HepG2 (cell line): ENCODE measurements at regions of chr7 and their contacts with region 1.

Region 1: GRCh38 chr7:43489257-43489656 is 93.7 kb upstream of the STK17A start:
- DNase-seq: peak; percentile 50
- ATAC-seq: peak; percentile 46
- H3K4me3 ChIP-seq: no peak overlapping the region
- H3K27ac ChIP-seq: peak overlapping the region; percentile 74
- H3K4me1 ChIP-seq: peaks cover 82% of the 10 kb centered on the region
- H3K27me3 ChIP-seq: no peaks in the 10 kb centered on the region
- CTCF ChIP-seq: no peak
- EP300 ChIP-seq: no peak
- POLR2A ChIP-seq: no peak
- RAD21 ChIP-seq: no peak

Region 2: DNA sequence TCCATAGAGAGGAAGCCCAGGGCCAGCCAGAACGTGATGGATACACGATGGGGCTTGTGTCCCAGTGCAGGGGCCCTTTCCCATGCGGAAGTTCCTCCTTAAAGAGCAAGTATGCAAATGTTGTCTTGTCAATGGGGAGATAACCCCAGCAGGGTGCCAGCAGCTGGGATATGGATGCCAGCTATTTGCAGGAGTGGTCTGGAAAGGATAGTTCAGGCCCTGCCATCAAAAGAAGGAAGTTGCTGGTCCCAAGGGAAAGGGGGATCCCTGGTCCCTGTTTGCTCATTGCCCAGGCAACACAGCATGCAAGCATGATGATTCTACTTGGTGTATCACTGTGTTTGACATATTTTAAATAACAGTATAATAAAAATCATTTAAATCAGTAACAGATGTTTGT is 449.9 kb before region 1 on chr7:
- CTCF ChIA-PET with region 1: no interaction called
- POLR2A ChIA-PET with region 1: no interaction called
- in situ Hi-C with region 1: no loop called
- intact Hi-C with region 1: no loop called
- DNase-seq: no peak
- ATAC-seq: no peak
- H3K4me3 ChIP-seq: no peak overlapping the region
- H3K27ac ChIP-seq: no peak overlapping the region
- H3K4me1 ChIP-seq: no peaks in the 10 kb centered on the region
- H3K27me3 ChIP-seq: 0 out of 5 replicates have a peak, but pooled peaks cover 0 to 1% of the 10 kb centered on the region in 2 experiments
- CTCF ChIP-seq: no peak
- EP300 ChIP-seq: no peak
- POLR2A ChIP-seq: no peak
- RAD21 ChIP-seq: no peak

Region 3: GRCh38 chr7:43501870-43502269 is 12.6 kb after region 1 on chr7:
- CTCF ChIA-PET with region 1: no interaction called
- POLR2A ChIA-PET with region 1: interaction called, 8 read pairs
- in situ Hi-C with region 1: no loop called
- intact Hi-C with region 1: loop called (anchors 1 kb)
- DNase-seq: peak; percentile 94
- ATAC-seq: peak; percentile 96
- H3K4me3 ChIP-seq: no peak overlapping the region
- H3K27ac ChIP-seq: peak overlapping the region; percentile 38
- H3K4me1 ChIP-seq: peaks cover 59% of the 10 kb centered on the region
- H3K27me3 ChIP-seq: no peaks in the 10 kb centered on the region
- CTCF ChIP-seq: no peak
- EP300 ChIP-seq: peak in 1 of 2 experiments; percentile 87; a peak in 2 of 4 replicates
- POLR2A ChIP-seq: no peak
- RAD21 ChIP-seq: no peak